Panc1 (cell line): ENCODE measurements at regions of chr4 and their contacts with region 1.

Region 1: GRCh38 chr4:5036239-5036638 is 15.0 kb upstream of the STK32B start:
- DNase-seq: no peak
- ATAC-seq: no peak
- H3K4me3 ChIP-seq: no peak overlapping the region
- H3K27ac ChIP-seq: peak overlapping the region; percentile 1; the same call in 1 of the 2 replicates
- H3K4me1 ChIP-seq: peaks cover 14% of the 10 kb centered on the region
- H3K27me3 ChIP-seq: no peaks in the 10 kb centered on the region
- CTCF ChIP-seq: no peak

Region 2: DNA sequence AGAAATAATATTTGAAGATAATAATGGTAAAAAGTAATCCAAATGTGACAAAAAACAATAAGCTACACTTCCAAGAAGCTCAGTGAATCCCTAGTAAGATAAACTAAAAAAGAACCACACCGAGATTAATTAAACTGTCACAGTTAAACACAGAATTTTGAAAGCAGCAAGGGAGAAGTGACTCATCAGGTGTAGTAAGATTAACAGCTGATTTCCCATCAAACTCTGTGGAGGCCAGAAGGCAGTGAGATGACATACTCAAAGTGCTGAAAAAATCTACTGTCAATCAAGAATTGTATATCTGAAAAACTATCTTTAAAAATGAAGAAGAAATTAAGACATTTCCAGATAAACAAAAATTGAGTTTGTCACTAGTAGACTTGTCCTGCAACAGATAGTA is 50.3 kb after region 1 on chr4:
- CTCF ChIA-PET with region 1: no interaction called
- POLR2A ChIA-PET with region 1: interaction called, 11 read pairs
- in situ Hi-C with region 1: no loop called
- intact Hi-C with region 1: no loop called
- DNase-seq: no peak
- ATAC-seq: no peak
- H3K4me3 ChIP-seq: no peak overlapping the region
- H3K27ac ChIP-seq: no peak overlapping the region
- H3K4me1 ChIP-seq: no peaks in the 10 kb centered on the region
- H3K27me3 ChIP-seq: no peaks in the 10 kb centered on the region
- CTCF ChIP-seq: no peak